ENCODE measurements at regions of chr14 and their contacts with region 1.

Region 1: DNA sequence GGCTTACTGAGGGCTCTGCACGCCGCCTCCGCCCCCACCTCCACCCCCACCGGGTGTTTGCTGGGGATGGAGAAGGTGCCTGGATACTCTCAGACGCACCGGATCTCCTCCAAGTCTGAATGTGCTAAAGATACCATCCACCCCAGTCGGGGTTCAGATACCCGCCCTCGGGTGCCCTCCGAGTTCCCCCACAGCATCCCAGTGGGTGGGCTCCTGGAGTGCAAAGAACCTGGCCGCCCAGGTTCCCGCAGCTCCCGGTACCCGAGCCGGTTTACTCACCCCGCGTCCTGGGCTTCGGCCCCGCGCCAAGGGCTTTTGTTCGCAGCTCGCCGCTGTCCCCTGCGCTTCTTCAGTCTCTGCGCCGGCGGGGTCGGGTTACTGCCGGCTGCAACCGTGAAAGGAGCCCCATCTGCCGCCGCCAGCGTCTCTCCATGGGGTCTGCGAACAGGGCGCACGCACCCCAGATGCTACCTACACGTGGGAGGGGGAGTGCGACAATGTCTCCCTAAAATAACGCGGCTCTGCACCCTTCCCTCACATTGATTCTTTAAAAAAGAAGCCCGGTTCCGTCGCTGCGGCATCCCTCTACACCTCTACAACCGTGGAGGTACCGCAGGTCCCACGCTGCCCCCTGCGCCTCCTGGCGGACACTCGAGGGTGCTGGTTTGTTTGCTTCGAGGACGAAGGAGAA is at the start of gene CCDC177:
- DNase-seq: no peak
- H3K4me3 ChIP-seq: peak within 1 kb of the TSS; percentile 17 to 62 (median 45)
- H3K27ac ChIP-seq: no peak within 1 kb of the TSS
- H3K4me1 ChIP-seq: peaks cover 28 to 43% (median 39%) of the 10 kb centered on the region in 4 donors
- H3K27me3 ChIP-seq: peaks cover 0 to 94% (median 54%) of the 10 kb centered on the region in 4 donors
- CTCF ChIP-seq: peak; percentile 62 to 79 (median 69)
- EP300 ChIP-seq: no peak
- POLR2A ChIP-seq: no peak
- total RNA-seq, gene CCDC177: not detected

Region 2: GRCh38 chr14:69535230-69535848 is 39.1 kb before region 1 on chr14:
- intact Hi-C with region 1: loop called (anchors 5 kb)
- DNase-seq: no peak
- H3K4me3 ChIP-seq: no peak overlapping the region
- H3K27ac ChIP-seq: no peak overlapping the region
- H3K4me1 ChIP-seq: peaks cover 0 to 4% (median 0%) of the 10 kb centered on the region in 4 donors
- H3K27me3 ChIP-seq: peaks cover 0 to 22% (median 0%) of the 10 kb centered on the region in 4 donors
- CTCF ChIP-seq: peak; percentile 39 to 59 (median 47)
- EP300 ChIP-seq: no peak
- POLR2A ChIP-seq: no peak

Measured in esophagus muscularis mucosa (tissue), 4 donors.